ENCODE measurements at regions of chr20 and their contacts with region 1.

Region 1: DNA sequence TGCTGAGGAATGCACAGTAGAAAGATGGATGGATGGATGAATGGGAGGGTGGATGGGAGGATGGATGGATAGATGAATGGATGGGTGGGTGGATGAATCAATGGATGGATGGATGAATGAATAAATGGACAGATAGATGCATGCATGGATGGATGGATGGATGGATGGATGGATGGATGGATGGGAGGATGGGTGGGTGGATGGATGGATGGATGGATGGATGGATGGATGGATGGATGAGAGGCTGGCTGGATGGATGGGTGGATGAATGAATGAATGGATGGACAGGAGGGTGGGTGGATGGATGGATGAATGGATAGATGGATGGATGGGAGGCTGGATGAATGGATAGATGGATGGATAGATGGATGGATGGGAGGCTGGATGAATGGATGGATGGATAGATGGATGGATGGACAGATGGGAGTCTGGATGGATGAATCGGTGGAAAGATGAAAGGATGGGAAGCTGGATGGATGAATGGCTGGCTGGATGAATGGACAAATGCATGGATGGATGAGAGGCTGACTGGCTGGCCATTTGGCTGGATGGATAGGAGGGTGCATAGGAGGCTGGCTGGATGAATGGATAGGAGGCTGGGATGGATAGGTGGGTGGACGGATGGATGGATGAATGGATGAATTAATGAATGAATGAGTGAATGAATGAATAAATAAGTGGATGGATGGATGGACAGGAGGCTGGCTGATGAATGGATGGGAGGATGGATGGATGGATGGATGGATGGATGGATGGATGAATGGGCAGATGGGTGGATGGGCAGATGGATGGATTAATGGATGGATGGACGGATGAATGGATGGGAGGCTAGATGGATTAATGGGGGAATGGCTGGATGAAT is 28.3 kb upstream of the NOL4L start:
- DNase-seq: no peak
- ATAC-seq: no peak
- H3K4me3 ChIP-seq: no peak overlapping the region
- H3K4me3 Mint-ChIP-seq: no peak overlapping the region
- H3K27ac ChIP-seq: no peak overlapping the region
- H3K27ac Mint-ChIP-seq: no peak overlapping the region
- H3K4me1 ChIP-seq: peaks cover 3 to 20% of the 10 kb centered on the region in 2 experiments
- H3K4me1 Mint-ChIP-seq: peaks cover 15 to 32% (median 21%) of the 10 kb centered on the region in 3 donors
- H3K27me3 ChIP-seq: peaks cover 0 to 15% of the 10 kb centered on the region in 2 experiments
- H3K27me3 Mint-ChIP-seq: peaks cover 0 to 1% of the 10 kb centered on the region in 2 donors

Region 2: GRCh38 chr20:32181606-32182005 is 431.8 kb before region 1 on chr20:
- CTCF ChIA-PET with region 1: interaction called in 1 of 2 experiments, 3 read pairs
- POLR2A ChIA-PET with region 1: interaction called in 1 of 2 experiments, 12 read pairs
- DNase-seq: no peak
- ATAC-seq: no peak
- H3K4me3 ChIP-seq: no peak overlapping the region
- H3K4me3 Mint-ChIP-seq: no peak overlapping the region
- H3K27ac ChIP-seq: no peak overlapping the region
- H3K27ac Mint-ChIP-seq: no peak overlapping the region
- H3K4me1 ChIP-seq: no peaks in the 10 kb centered on the region
- H3K4me1 Mint-ChIP-seq: peaks cover 2 to 18% (median 2%) of the 10 kb centered on the region in 3 donors
- H3K27me3 ChIP-seq: peaks cover 0 to 5% of the 10 kb centered on the region in 2 experiments
- H3K27me3 Mint-ChIP-seq: no peaks in the 10 kb centered on the region

Region 3: DNA sequence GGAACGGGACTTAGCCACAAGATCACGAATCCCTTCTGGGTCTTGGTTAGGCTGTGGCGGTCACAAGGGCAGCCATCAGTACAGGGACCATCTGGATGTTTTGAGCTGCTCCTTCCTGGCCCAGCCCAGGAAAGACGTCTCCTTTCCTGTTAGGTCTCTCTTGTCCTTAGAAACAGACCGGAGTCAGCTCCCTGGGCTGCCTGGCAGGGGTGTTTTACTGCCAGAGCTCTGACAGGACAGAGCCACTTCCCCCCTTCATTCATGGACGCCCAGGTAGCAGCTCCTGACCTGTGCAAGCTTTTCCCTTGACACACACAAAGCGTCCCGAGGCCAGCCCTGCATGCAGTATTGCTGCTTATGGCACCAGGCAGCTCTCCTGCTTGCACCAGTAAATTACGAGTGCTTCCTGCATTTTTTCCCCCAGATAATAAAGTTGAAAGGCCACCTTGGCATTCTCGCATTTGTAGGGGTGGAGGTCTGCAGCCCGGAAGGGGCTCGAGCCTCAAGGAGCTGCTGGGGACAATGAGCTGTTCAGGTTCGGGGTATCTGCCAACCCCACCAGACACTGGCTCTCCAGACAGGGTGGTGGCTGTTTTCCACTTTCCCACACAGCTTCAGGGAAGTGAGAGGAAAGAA is 115.7 kb before region 1 on chr20:
- CTCF ChIA-PET with region 1: no interaction called
- POLR2A ChIA-PET with region 1: no interaction called
- DNase-seq: no peak
- ATAC-seq: no peak
- H3K4me3 ChIP-seq: no peak overlapping the region
- H3K4me3 Mint-ChIP-seq: no peak overlapping the region
- H3K27ac ChIP-seq: no peak overlapping the region
- H3K27ac Mint-ChIP-seq: peak overlapping the region in 1 of 2 donors; percentile 82
- H3K4me1 ChIP-seq: peaks cover 0 to 16% of the 10 kb centered on the region in 2 experiments
- H3K4me1 Mint-ChIP-seq: peaks cover 22 to 55% (median 50%) of the 10 kb centered on the region in 3 donors
- H3K27me3 ChIP-seq: no peaks in the 10 kb centered on the region
- H3K27me3 Mint-ChIP-seq: no peaks in the 10 kb centered on the region

Region 4: DNA sequence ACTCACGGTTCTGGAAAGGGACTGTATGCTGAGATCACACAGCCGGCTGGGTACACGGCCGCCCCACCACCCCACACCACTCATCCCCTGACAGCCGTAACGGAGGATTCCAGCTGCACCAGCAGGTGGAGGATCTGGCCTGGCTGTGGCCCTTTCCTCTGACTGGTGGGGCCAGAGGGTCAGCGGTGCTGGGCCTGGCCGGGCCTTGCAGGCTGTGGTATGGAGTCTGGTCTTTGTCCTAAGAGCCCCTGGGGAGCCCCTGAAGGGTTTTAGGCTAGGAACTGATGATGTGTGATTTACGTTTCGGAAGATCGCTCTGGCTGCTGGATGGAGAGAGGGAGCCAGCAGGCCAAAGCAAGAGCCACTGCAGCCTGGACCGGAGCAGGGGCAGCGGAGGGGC is 54.9 kb before region 1 on chr20:
- CTCF ChIA-PET with region 1: no interaction called
- POLR2A ChIA-PET with region 1: no interaction called
- DNase-seq: no peak
- ATAC-seq: no peak
- H3K4me3 ChIP-seq: no peak overlapping the region
- H3K4me3 Mint-ChIP-seq: peak overlapping the region in 1 of 3 donors; percentile 23
- H3K27ac ChIP-seq: no peak overlapping the region
- H3K27ac Mint-ChIP-seq: peak overlapping the region; percentile 49 to 61
- H3K4me1 ChIP-seq: peaks cover 15 to 84% of the 10 kb centered on the region in 2 experiments
- H3K4me1 Mint-ChIP-seq: peaks cover 78 to 82% (median 80%) of the 10 kb centered on the region in 3 donors
- H3K27me3 ChIP-seq: no peaks in the 10 kb centered on the region
- H3K27me3 Mint-ChIP-seq: no peaks in the 10 kb centered on the region

Region 5: GRCh38 chr20:32718731-32719348 is 105.4 kb after region 1 on chr20:
- CTCF ChIA-PET with region 1: no interaction called
- POLR2A ChIA-PET with region 1: no interaction called
- DNase-seq: no peak
- ATAC-seq: no peak
- H3K4me3 ChIP-seq: no peak overlapping the region
- H3K4me3 Mint-ChIP-seq: no peak overlapping the region
- H3K27ac ChIP-seq: no peak overlapping the region
- H3K27ac Mint-ChIP-seq: no peak overlapping the region
- H3K4me1 ChIP-seq: no peaks in the 10 kb centered on the region
- H3K4me1 Mint-ChIP-seq: peaks cover 0 to 5% (median 3%) of the 10 kb centered on the region in 3 donors
- H3K27me3 ChIP-seq: no peaks in the 10 kb centered on the region
- H3K27me3 Mint-ChIP-seq: no peaks in the 10 kb centered on the region

Region 6: GRCh38 chr20:32819992-32820710 is 206.7 kb after region 1 on chr20:
- CTCF ChIA-PET with region 1: no interaction called
- POLR2A ChIA-PET with region 1: no interaction called
- DNase-seq: peak in 27 of 35 experiments; percentile 55 to 91 (median 76)
- ATAC-seq: peak; percentile 77 to 87 (median 80)
- H3K4me3 ChIP-seq: peak overlapping the region; percentile 62 to 88
- H3K4me3 Mint-ChIP-seq: peak overlapping the region; percentile 89 to 96 (median 94)
- H3K27ac ChIP-seq: peak overlapping the region; percentile 89
- H3K27ac Mint-ChIP-seq: peak overlapping the region; percentile 93 to 94
- H3K4me1 ChIP-seq: peaks cover 22 to 48% of the 10 kb centered on the region in 2 experiments
- H3K4me1 Mint-ChIP-seq: peaks cover 43 to 47% (median 46%) of the 10 kb centered on the region in 3 donors
- H3K27me3 ChIP-seq: no peaks in the 10 kb centered on the region
- H3K27me3 Mint-ChIP-seq: no peaks in the 10 kb centered on the region